Activated naive CD4-positive, alpha-beta T cell treated with anti-CD3 and anti-CD28 coated beads for 36 hours (primary cell): ENCODE measurements at regions of chr6 and their contacts with region 1.

Region 1: DNA sequence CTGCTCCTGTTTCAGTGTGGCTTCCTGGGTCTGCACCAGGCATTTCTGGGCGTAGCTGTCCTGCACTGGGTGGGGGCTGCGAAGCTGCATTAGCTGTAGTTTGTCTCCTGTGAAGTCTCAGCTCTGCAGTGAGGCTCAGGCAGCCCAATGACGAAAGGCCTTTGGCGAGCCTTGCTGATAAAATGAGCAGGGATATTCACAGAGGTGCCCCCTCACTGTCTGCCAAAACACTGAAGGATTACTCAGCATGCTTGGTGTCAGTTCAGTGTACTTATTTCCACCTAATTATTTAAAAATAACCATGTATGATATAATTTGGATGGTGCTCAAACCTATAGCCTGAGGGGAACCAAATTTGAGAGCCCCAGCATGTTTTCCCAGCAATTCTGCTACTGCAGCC is 73.5 kb downstream of the ECT2L start:
- DNase-seq: no peak
- H3K4me3 Mint-ChIP-seq: no peak overlapping the region
- H3K27ac Mint-ChIP-seq: no peak overlapping the region
- H3K4me1 Mint-ChIP-seq: peaks cover 14% of the 10 kb centered on the region
- H3K27me3 Mint-ChIP-seq: peaks cover 2% of the 10 kb centered on the region

Region 2: GRCh38 chr6:138410972-138411667 is 458.3 kb before region 1 on chr6:
- CTCF ChIA-PET with region 1: no interaction called
- intact Hi-C with region 1: loop called (anchors 10 kb)
- DNase-seq: peak; percentile 31
- H3K4me3 Mint-ChIP-seq: peak overlapping the region; percentile 1
- H3K27ac Mint-ChIP-seq: peak overlapping the region; percentile 84
- H3K4me1 Mint-ChIP-seq: peaks cover 32% of the 10 kb centered on the region
- H3K27me3 Mint-ChIP-seq: no peaks in the 10 kb centered on the region

Region 3: GRCh38 chr6:138856654-138857053 is 12.7 kb before region 1 on chr6:
- CTCF ChIA-PET with region 1: no interaction called
- intact Hi-C with region 1: loop called (anchors 1 kb)
- DNase-seq: no peak
- H3K4me3 Mint-ChIP-seq: no peak overlapping the region
- H3K27ac Mint-ChIP-seq: no peak overlapping the region
- H3K4me1 Mint-ChIP-seq: peaks cover 4% of the 10 kb centered on the region
- H3K27me3 Mint-ChIP-seq: peaks cover 14% of the 10 kb centered on the region

Region 4: GRCh38 chr6:138944412-138944811 is 75.0 kb after region 1 on chr6:
- CTCF ChIA-PET with region 1: no interaction called
- intact Hi-C with region 1: loop called (anchors 2 kb)
- DNase-seq: peak; percentile 25
- H3K4me3 Mint-ChIP-seq: no peak overlapping the region
- H3K27ac Mint-ChIP-seq: no peak overlapping the region
- H3K4me1 Mint-ChIP-seq: peaks cover 29% of the 10 kb centered on the region
- H3K27me3 Mint-ChIP-seq: no peaks in the 10 kb centered on the region

Region 5: GRCh38 chr6:138999954-139000725 is 130.7 kb after region 1 on chr6:
- CTCF ChIA-PET with region 1: no interaction called
- intact Hi-C with region 1: no loop called
- DNase-seq: no peak
- H3K4me3 Mint-ChIP-seq: no peak overlapping the region
- H3K27ac Mint-ChIP-seq: no peak overlapping the region
- H3K4me1 Mint-ChIP-seq: no peaks in the 10 kb centered on the region
- H3K27me3 Mint-ChIP-seq: no peaks in the 10 kb centered on the region